AG04450 (cell line): ENCODE measurements at regions of chr16 and their contacts with region 1.

Region 1: DNA sequence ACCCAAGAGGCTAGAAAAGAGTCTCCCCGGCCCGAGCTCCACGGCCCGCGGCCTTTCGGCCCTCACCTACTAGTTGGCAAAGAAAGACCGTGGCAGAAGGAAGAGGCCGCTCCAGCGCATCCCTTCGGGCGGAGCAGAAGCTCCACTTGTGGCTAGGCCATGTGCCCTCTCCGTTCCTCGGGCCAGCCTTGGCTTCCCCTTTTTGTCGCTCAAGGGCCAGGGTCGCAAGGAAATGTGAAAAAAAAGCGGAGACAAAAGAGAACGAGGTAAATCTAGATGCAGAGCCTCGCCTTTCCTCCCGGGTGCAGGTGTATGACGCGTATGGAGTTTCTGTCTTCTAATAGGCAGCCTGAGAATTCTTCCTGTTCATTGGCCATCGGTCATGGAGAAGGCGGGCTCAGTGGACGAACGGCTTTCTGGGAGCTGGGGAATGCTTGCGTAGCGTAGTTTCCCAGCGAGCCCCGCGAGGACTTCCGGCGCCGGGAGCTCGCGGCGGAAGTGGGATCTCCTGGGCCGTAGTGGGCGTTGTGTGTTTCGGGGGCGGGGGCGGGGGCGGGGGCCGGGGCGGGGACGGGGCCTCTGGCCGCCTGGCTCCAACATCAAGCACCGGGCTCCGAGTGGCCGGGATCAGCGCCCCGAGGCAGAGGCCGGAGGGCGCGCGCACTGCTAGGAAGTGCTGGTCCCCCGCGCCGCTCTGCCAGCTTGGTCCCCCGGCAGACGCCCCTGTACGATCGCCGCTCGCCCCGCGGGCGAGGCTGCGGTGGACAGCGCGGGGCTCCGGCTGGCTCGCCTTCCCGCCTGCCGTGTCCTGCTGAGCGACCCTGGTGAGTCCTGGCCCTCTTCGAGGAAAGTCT is at the start of gene ZNF213:
- DNase-seq: peak; percentile 93
- H3K4me3 ChIP-seq: peak within 1 kb of the TSS; percentile 97
- H3K27ac ChIP-seq: peak within 1 kb of the TSS; percentile 85
- H3K27me3 ChIP-seq: no peaks in the 10 kb centered on the region
- CTCF ChIP-seq: no peak
- polyA plus RNA-seq, gene ZNF213: 0.47 and 1.2 TPM in 2 replicates

Region 2: GRCh38 chr16:3101841-3102470 is 32.8 kb before region 1 on chr16:
- CTCF ChIA-PET with region 1: interaction called, 8 read pairs
- POLR2A ChIA-PET with region 1: interaction called, 11 read pairs
- DNase-seq: no peak
- H3K4me3 ChIP-seq: no peak overlapping the region
- H3K27ac ChIP-seq: no peak overlapping the region
- H3K27me3 ChIP-seq: peaks cover 24% of the 10 kb centered on the region
- CTCF ChIP-seq: no peak

Region 3: DNA sequence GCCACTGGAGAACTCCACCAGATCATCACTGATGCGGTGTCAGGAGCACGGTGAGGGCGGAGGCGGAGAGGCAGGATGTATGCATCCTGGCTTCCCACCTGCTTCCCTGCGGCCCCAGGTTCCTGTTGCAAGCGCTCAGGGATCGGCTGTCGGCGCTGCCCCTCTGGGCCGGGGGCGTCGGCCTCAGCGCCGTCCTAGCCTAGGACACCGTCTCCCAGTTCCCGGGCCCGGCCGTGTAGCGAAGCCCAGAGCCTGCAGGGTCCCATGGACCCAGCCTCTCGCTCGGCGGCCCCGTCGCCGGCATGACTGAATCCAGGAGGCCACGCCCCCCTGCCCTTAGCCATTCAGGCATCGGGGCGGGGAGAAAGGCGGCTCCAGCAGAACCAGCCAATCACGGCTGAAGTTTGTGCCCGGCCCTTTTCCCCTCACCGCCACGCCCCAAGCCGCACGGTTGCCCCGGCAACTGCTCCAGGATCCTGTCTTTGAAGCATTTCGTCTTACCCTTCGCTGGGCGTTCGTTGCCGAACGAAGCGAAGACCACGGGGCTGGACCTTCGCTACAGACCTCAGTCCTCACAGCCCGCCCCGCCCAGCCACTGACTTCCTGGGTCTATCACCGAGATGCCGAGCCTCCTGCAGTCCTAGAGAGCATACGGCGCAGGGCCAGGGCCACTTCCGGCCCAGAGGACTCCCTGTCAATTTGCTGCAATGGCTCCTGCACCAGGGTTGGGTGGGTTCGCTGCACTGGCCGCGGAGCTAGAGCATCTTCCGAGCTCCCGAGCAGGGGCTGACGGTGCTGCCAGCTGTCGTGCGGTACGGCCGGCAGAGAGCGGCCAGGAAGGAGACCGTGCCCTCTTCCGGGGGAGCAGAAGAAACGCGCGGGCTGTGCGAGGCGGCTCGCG is 10.6 kb before region 1 on chr16:
- CTCF ChIA-PET with region 1: interaction called, 5 read pairs
- POLR2A ChIA-PET with region 1: interaction called, 12 read pairs
- DNase-seq: peak; percentile 74
- H3K4me3 ChIP-seq: peak overlapping the region; percentile 85
- H3K27ac ChIP-seq: peak overlapping the region; percentile 68
- H3K27me3 ChIP-seq: no peaks in the 10 kb centered on the region
- CTCF ChIP-seq: peak; percentile 31

Region 4: DNA sequence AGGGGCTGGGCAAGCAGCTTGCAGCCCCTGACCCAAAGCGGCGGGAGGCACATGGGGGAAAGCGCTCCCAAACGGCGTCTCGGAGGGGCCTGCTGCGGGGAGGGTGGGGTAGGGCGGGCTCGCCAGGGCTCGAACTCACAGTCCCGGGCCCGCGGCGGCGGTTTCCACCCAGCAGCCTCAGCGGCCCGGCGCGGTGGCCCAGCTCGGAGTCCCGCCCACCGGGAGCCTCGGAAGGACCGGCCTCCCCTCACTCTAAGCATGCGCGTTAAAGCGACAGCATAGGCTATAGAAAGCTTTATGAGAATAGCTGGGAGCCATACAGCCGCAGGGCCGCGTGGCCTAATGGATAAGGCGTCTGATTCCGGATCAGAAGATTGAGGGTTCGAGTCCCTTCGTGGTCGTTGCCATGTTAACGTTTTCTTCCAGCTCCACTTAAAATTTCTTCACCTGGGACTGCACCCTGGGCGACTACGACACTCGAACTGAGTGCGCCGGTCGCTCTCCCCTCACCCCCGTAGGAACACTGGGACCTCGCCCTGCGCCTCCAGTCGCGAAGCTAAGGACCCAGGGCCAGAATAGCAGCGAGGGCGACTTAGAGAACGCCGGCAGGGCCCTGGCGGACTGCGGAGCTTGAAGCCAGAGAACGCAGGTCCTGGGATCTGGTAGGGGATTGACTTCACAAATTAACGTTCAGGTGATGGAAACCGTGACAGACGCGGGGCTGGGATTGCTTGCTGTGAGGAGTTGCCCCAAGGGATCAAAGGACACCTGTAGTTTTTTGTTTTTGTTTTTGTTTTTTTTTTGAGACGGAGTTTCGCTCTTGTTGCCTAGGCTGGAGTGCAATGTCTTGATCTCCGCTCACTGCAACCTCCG is 15.8 kb after region 1 on chr16:
- CTCF ChIA-PET with region 1: interaction called, 5 read pairs
- POLR2A ChIA-PET with region 1: interaction called, 27 read pairs
- DNase-seq: peak; percentile 90
- H3K4me3 ChIP-seq: peak overlapping the region; percentile 81
- H3K27ac ChIP-seq: peak overlapping the region; percentile 84
- H3K27me3 ChIP-seq: no peaks in the 10 kb centered on the region
- CTCF ChIP-seq: no peak